ENCODE measurements at regions of chr3 and their contacts with region 1.

Region 1: DNA sequence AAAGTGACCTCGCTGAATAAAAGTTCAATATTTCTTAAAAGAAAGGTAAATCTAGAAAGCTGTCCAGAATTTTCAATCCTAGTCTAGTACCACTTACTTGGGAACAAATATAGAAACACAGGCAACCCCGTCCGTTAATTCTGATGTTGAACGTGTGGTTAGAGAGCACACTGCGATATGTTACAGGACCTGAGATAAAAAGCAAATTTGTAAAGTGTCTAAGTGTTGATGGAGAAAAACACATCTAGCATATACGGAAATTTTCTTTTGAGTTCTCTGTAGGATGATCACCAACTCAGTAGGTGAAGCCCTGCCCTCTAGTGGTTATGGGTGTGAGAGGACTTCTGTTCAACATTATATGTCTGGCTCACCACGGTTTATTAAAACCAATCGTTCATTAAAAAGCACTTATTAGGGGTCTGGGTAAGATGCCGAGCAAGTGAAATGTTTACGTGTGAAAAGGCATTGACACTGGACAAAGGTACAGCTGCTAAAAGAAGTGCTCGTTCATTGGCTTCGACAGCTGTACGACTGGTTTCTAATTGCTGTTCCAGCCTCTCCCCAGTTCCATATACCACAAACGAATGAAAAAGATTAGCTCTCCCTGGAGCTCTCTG is 1.0 kb upstream of the ATP2C1 start:
- DNase-seq: peak; percentile 64
- ATAC-seq: peak; percentile 73
- H3K4me3 ChIP-seq: peak overlapping the region; percentile 86
- H3K27ac ChIP-seq: peak overlapping the region; percentile 94
- H3K4me1 ChIP-seq: no peaks in the 10 kb centered on the region; the same call in 1 of the 2 replicates
- H3K27me3 ChIP-seq: no peaks in the 10 kb centered on the region
- CTCF ChIP-seq: peak; percentile 77 to 90 (median 82)
- EP300 ChIP-seq: no peak
- POLR2A ChIP-seq: no peak
- RAD21 ChIP-seq: peak; percentile 94

Region 2: DNA sequence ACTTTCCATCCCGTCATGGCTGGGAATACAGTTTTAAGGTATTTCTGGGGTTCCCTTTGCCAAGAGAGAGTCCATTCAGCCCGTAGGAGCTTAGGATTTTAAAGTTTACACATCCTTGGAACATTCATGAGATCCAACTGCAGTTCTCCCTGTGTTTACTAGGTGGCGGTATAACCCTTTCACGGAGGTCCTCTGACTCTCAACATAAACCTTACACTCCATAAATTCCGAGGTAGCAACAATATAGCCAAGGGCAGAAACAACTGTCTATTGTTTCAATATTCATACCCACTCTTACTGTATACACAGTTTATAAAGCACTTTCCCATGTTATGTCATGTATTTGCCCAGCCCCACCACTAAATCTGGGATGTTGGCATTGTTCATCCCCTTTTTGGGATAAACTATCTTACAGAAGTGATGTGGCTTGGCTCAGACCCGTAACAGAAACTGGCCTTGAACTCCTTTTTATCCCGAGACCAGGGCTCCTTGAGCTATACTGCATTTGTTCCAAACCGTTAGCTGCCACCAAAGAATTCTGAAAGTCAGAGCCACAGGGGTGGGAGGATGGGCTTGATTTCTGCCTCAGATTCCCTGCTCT is 616.6 kb before region 1 on chr3:
- CTCF ChIA-PET with region 1: no interaction called
- POLR2A ChIA-PET with region 1: no interaction called
- RAD21 ChIA-PET with region 1: interaction called, 3 read pairs
- SMC1A ChIA-PET with region 1: no interaction called
- in situ Hi-C with region 1: no loop called
- intact Hi-C with region 1: loop called (anchors 5 kb)
- DNase-seq: no peak
- ATAC-seq: peak; percentile 84
- H3K4me3 ChIP-seq: no peak overlapping the region
- H3K27ac ChIP-seq: no peak overlapping the region
- H3K4me1 ChIP-seq: no peaks in the 10 kb centered on the region
- H3K27me3 ChIP-seq: no peaks in the 10 kb centered on the region
- CTCF ChIP-seq: peak; percentile 82 to 89 (median 84)
- EP300 ChIP-seq: no peak
- POLR2A ChIP-seq: no peak
- RAD21 ChIP-seq: peak; percentile 84

Region 3: GRCh38 chr3:130529513-130530215 is 363.2 kb before region 1 on chr3:
- CTCF ChIA-PET with region 1: no interaction called
- POLR2A ChIA-PET with region 1: no interaction called
- RAD21 ChIA-PET with region 1: no interaction called
- SMC1A ChIA-PET with region 1: no interaction called
- in situ Hi-C with region 1: no loop called
- intact Hi-C with region 1: no loop called
- DNase-seq: no peak
- ATAC-seq: peak; percentile 41; the same call in 2 of the 3 replicates
- H3K4me3 ChIP-seq: no peak overlapping the region
- H3K27ac ChIP-seq: no peak overlapping the region
- H3K4me1 ChIP-seq: no peaks in the 10 kb centered on the region
- H3K27me3 ChIP-seq: no peaks in the 10 kb centered on the region; a peak in 1 of 4 replicates
- CTCF ChIP-seq: no peak
- EP300 ChIP-seq: no peak
- POLR2A ChIP-seq: no peak
- RAD21 ChIP-seq: no peak

Region 4: GRCh38 chr3:130746246-130747039 is 146.4 kb before region 1 on chr3 and contains the start of gene PIK3R4:
- CTCF ChIA-PET with region 1: interaction called, 48 read pairs
- POLR2A ChIA-PET with region 1: interaction called, 10 read pairs
- RAD21 ChIA-PET with region 1: interaction called, 14 read pairs
- SMC1A ChIA-PET with region 1: interaction called, 9 read pairs
- in situ Hi-C with region 1: loop called (anchors 5 kb)
- intact Hi-C with region 1: no loop called
- DNase-seq: peak; percentile 95
- ATAC-seq: peak; percentile 87
- H3K4me3 ChIP-seq: peak within 1 kb of the TSS; percentile 85
- H3K27ac ChIP-seq: peak within 1 kb of the TSS; percentile 87
- H3K4me1 ChIP-seq: peaks cover 4% of the 10 kb centered on the region; the same call in 1 of the 2 replicates
- H3K27me3 ChIP-seq: no peaks in the 10 kb centered on the region
- CTCF ChIP-seq: no peak
- EP300 ChIP-seq: no peak
- POLR2A ChIP-seq: peak; percentile 80
- RAD21 ChIP-seq: no peak
- polyA plus RNA-seq, gene PIK3R4: 22.6 to 35.8 TPM

Region 5: DNA sequence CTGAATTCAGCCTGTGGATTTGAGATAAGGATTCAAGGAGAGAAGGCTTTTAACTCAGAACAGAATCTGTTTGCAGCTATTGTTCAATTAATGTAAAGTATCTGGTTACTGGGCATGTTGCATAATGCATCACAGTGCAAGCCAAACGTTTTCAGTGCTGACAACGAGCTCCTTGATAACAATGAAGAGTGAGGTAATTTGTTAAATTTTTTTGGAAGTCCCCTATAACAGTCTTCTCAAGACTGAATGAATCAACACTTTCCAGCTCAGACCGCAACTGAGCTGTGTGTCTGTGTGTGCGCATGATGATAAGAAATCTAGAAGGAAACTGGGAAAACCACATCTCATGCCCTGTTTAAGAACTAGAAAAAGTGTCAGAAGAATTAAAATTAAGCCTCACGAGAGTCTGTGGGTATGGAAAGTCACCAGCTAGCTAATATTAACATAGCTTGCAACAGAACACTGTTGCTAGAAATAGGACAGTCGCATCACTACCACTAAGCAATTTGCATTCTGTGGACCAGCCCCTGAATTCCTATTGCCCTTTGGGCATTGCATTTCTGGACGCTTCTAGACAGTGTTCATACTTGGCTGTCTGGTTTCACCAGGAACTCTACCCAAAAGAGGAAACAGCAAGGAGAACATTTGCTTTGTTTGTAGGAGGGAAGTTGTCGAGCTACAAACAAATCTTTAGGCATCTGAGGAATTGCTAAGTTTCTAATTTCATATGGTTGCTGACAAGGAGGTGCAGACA is 42.6 kb before region 1 on chr3:
- CTCF ChIA-PET with region 1: interaction called, 54 read pairs
- POLR2A ChIA-PET with region 1: interaction called, 47 read pairs
- RAD21 ChIA-PET with region 1: interaction called, 81 read pairs
- SMC1A ChIA-PET with region 1: interaction called, 144 read pairs
- in situ Hi-C with region 1: no loop called
- intact Hi-C with region 1: loop called (anchors 1 kb)
- DNase-seq: peak; percentile 95
- ATAC-seq: peak; percentile 77
- H3K4me3 ChIP-seq: peak overlapping the region; percentile 73
- H3K27ac ChIP-seq: peak overlapping the region; percentile 88
- H3K4me1 ChIP-seq: peaks cover 14% of the 10 kb centered on the region
- H3K27me3 ChIP-seq: no peaks in the 10 kb centered on the region
- CTCF ChIP-seq: no peak
- EP300 ChIP-seq: peak; percentile 96 to 99
- POLR2A ChIP-seq: peak; percentile 56; the same call in 1 of the 2 replicates
- RAD21 ChIP-seq: no peak

Region 6: GRCh38 chr3:130870423-130870822 is 22.4 kb before region 1 on chr3:
- CTCF ChIA-PET with region 1: interaction called, 10 read pairs
- POLR2A ChIA-PET with region 1: no interaction called
- RAD21 ChIA-PET with region 1: no interaction called
- SMC1A ChIA-PET with region 1: interaction called, 11 read pairs
- in situ Hi-C with region 1: no loop called
- intact Hi-C with region 1: no loop called
- DNase-seq: no peak
- ATAC-seq: no peak
- H3K4me3 ChIP-seq: no peak overlapping the region
- H3K27ac ChIP-seq: no peak overlapping the region
- H3K4me1 ChIP-seq: no peaks in the 10 kb centered on the region
- H3K27me3 ChIP-seq: no peaks in the 10 kb centered on the region
- CTCF ChIP-seq: no peak
- EP300 ChIP-seq: no peak
- POLR2A ChIP-seq: no peak
- RAD21 ChIP-seq: no peak

Region 7: DNA sequence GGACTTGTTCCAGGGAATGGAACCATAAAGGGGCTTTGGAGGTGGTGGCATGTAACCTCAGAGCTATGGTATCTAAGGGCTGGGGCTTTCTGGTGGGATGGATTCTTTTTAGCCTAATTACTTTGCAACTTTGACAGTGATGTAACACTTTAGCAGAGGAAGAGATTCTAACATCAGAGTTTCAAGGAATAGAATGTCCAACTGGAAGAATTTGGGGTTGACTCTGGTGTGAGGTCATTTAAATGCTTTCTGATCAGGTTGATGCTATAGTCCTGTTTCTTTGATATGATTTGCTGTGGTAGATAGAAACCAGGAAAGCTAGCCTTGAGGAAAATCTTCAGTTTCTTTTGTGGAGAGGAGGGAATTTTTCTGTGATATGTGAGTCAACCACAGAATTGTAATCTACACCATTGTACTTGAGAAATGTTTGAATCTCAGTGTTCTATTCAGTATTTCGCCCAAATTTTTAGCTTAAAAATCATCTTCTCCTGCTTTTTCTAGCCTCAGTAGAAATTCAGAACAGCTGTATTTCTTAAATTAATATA is 41.0 kb after region 1 on chr3:
- CTCF ChIA-PET with region 1: no interaction called
- POLR2A ChIA-PET with region 1: no interaction called
- RAD21 ChIA-PET with region 1: no interaction called
- SMC1A ChIA-PET with region 1: interaction called, 10 read pairs
- in situ Hi-C with region 1: no loop called
- intact Hi-C with region 1: no loop called
- DNase-seq: no peak
- ATAC-seq: no peak
- H3K4me3 ChIP-seq: no peak overlapping the region
- H3K27ac ChIP-seq: no peak overlapping the region
- H3K4me1 ChIP-seq: no peaks in the 10 kb centered on the region
- H3K27me3 ChIP-seq: no peaks in the 10 kb centered on the region
- CTCF ChIP-seq: no peak
- EP300 ChIP-seq: no peak
- POLR2A ChIP-seq: no peak
- RAD21 ChIP-seq: no peak

Region 8: GRCh38 chr3:131125684-131126083 is 232.8 kb after region 1 on chr3:
- CTCF ChIA-PET with region 1: no interaction called
- POLR2A ChIA-PET with region 1: no interaction called
- RAD21 ChIA-PET with region 1: no interaction called
- SMC1A ChIA-PET with region 1: no interaction called
- in situ Hi-C with region 1: no loop called
- intact Hi-C with region 1: no loop called
- DNase-seq: no peak
- ATAC-seq: no peak
- H3K4me3 ChIP-seq: no peak overlapping the region
- H3K27ac ChIP-seq: no peak overlapping the region
- H3K4me1 ChIP-seq: no peaks in the 10 kb centered on the region
- H3K27me3 ChIP-seq: no peaks in the 10 kb centered on the region
- CTCF ChIP-seq: no peak
- EP300 ChIP-seq: no peak
- POLR2A ChIP-seq: no peak
- RAD21 ChIP-seq: no peak

Measured in GM12878 (cell line).